ENCODE measurements at regions of chr10 and their contacts with region 1.

Region 1: DNA sequence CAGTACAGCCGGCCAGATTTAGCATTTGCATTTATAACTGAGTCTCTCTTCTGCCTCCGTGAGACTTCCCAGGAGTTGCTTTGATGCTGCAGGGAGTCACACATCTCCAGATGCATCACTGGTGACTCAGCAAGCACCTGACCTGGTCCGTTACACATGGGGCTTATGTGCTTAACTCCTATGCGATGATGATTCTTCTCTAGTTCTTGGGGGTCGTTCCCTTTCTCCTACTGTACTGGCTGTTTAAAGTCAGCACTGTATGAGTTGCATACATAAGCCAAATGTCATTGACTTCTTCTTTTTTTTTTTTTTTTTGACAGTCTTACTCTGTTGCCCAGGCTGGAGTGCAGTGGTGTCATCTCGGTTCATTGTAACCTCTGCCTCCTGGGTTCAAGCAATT is 13.0 kb upstream of the AKR1E2 start:
- DNase-seq: no peak
- ATAC-seq: no peak
- H3K4me3 ChIP-seq: no peak overlapping the region
- H3K4me3 Mint-ChIP-seq: no peak overlapping the region
- H3K27ac ChIP-seq: no peak overlapping the region
- H3K27ac Mint-ChIP-seq: no peak overlapping the region
- H3K4me1 ChIP-seq: no peaks in the 10 kb centered on the region
- H3K4me1 Mint-ChIP-seq: peaks cover 3% of the 10 kb centered on the region
- H3K27me3 ChIP-seq: no peaks in the 10 kb centered on the region
- H3K27me3 Mint-ChIP-seq: peaks cover 24% of the 10 kb centered on the region
- CTCF ChIP-seq: no peak

Region 2: GRCh38 chr10:4830551-4830950 is 17.5 kb after region 1 on chr10:
- CTCF ChIA-PET with region 1: interaction called, 14 read pairs
- POLR2A ChIA-PET with region 1: no interaction called
- intact Hi-C with region 1: no loop called
- DNase-seq: no peak
- ATAC-seq: no peak
- H3K4me3 ChIP-seq: no peak overlapping the region
- H3K4me3 Mint-ChIP-seq: no peak overlapping the region
- H3K27ac ChIP-seq: no peak overlapping the region
- H3K27ac Mint-ChIP-seq: no peak overlapping the region
- H3K4me1 ChIP-seq: peaks cover 0 to 3% of the 10 kb centered on the region in 2 donors
- H3K4me1 Mint-ChIP-seq: peaks cover 5% of the 10 kb centered on the region
- H3K27me3 ChIP-seq: peaks cover 0 to 21% (median 5%) of the 10 kb centered on the region in 4 experiments
- H3K27me3 Mint-ChIP-seq: peaks cover 51% of the 10 kb centered on the region
- CTCF ChIP-seq: no peak

Measured in B cell (primary cell).